ENCODE measurements at regions of chr1 and their contacts with region 1.

Region 1: GRCh38 chr1:229661022-229661877 is 35.2 kb downstream of the URB2 start:
- DNase-seq: peak; percentile 30
- H3K4me3 ChIP-seq: no peak overlapping the region
- H3K27ac ChIP-seq: no peak overlapping the region
- H3K27me3 ChIP-seq: no peaks in the 10 kb centered on the region
- CTCF ChIP-seq: peak; percentile 91

Region 2: GRCh38 chr1:229378586-229379367 is 282.5 kb before region 1 on chr1:
- CTCF ChIA-PET with region 1: no interaction called
- POLR2A ChIA-PET with region 1: no interaction called
- DNase-seq: no peak
- H3K4me3 ChIP-seq: no peak overlapping the region
- H3K27ac ChIP-seq: no peak overlapping the region
- H3K27me3 ChIP-seq: peaks cover 4% of the 10 kb centered on the region
- CTCF ChIP-seq: 0 out of 2 replicates have a peak, but pooled peaks have one; percentile 4

Region 3: DNA sequence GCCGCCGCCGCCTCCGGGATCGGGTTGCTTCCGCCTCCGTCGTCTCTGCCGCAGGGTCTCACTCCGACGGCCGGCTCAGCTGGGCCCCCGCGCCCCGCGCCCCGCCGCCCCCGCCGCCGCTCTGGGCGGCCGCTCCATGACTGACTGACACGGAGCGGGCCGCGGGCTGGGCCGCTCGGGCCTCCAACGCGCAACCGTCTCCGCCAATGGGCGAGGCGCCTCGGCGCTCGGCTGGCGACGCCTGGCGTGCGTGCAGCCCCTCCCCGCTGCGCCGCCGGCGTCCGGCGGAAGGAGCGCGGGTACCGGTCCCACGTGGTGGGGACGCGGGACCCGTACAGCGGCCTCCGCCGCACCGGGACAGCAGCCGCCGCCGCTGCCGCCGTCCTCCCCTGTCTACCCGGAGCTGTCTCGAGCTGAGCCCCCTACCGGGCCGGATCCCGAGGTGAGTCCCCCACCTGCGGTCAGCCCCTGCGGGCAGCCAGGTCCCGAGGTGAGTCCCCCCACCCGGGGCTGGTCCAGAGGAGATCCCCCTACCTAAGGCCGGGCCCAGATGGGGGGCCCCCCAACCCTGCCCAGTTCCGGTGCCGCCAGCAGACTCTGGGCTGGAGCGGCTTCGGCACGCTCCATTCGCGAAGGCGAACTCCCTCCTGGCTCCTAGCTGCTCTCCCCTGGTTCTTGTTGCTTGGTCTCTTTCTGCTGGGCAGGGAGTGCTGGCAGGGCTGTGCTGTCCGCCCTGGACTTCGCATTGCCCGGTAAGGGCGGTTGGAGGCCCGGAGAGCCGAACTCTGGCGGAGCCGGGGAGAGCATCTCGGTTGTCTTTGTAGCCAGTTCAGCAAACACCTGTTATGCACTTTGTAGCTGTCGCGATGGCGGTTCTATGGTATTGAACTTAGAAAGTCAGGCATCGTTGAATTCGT is 35.1 kb before region 1 on chr1 and contains the starts of genes TAF5L and URB2:
- CTCF ChIA-PET with region 1: no interaction called
- POLR2A ChIA-PET with region 1: no interaction called
- DNase-seq: peak; percentile 65
- H3K4me3 ChIP-seq: peak within 1 kb of the TSS; percentile 93
- H3K27ac ChIP-seq: peak within 1 kb of the TSS; percentile 66
- H3K27me3 ChIP-seq: no peaks in the 10 kb centered on the region
- CTCF ChIP-seq: no peak
- polyA plus RNA-seq, gene TAF5L: 17.3 and 17.9 TPM in 2 replicates
- polyA plus RNA-seq, gene URB2: 6.2 and 6.4 TPM in 2 replicates

Region 4: GRCh38 chr1:229674042-229674441 is 12.8 kb after region 1 on chr1:
- CTCF ChIA-PET with region 1: interaction called, 14 read pairs
- POLR2A ChIA-PET with region 1: interaction called, 4 read pairs
- DNase-seq: no peak
- H3K4me3 ChIP-seq: no peak overlapping the region
- H3K27ac ChIP-seq: no peak overlapping the region
- H3K27me3 ChIP-seq: no peaks in the 10 kb centered on the region
- CTCF ChIP-seq: no peak

Region 5: DNA sequence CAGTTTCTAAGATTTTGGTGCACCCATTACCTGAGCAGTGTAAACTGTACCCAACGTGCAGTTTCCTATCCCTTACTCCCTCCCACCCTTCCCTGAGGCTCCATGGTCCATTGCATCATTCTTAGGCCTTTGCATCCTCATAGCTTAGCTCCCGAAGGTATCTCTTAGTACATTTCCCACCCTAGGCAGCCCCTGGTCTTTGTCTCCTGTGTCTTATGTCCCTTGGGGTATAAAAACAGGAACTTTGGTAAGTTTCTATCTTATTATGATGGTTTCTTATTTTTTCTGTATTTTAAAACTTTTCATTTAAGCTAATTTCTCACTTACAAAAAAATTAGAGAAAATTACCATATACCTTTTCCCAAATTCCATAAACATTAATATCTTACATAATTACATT is 42.9 kb after region 1 on chr1:
- CTCF ChIA-PET with region 1: no interaction called
- POLR2A ChIA-PET with region 1: no interaction called
- DNase-seq: no peak
- H3K4me3 ChIP-seq: no peak overlapping the region
- H3K27ac ChIP-seq: no peak overlapping the region
- H3K27me3 ChIP-seq: no peaks in the 10 kb centered on the region
- CTCF ChIP-seq: no peak

Region 6: DNA sequence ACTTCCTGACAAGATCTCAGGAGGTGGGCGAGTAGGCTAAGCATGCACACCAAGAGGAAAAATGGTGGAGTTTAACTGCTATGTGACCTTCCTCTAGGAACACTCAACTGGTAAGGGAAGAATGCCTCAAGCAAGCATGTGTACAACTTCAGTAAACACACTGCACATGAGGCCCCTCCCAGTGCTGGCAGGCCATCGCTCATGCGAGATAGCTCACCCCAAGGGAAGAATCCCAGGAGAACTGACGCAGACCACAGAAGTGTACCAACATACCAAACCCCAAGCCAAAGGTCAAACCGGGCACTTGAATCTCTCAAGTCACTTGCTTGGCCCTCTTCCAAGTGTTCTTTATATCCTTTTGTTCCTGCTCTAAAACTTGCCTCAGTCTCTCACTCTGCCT is 365.3 kb after region 1 on chr1:
- CTCF ChIA-PET with region 1: no interaction called
- POLR2A ChIA-PET with region 1: no interaction called
- DNase-seq: no peak
- H3K4me3 ChIP-seq: no peak overlapping the region
- H3K27ac ChIP-seq: no peak overlapping the region
- H3K27me3 ChIP-seq: peaks cover 2% of the 10 kb centered on the region
- CTCF ChIP-seq: no peak

Region 7: GRCh38 chr1:230303822-230304221 is 642.6 kb after region 1 on chr1:
- CTCF ChIA-PET with region 1: interaction called, 10 read pairs
- POLR2A ChIA-PET with region 1: no interaction called
- DNase-seq: no peak
- H3K4me3 ChIP-seq: no peak overlapping the region
- H3K27ac ChIP-seq: no peak overlapping the region
- H3K27me3 ChIP-seq: peaks cover 6% of the 10 kb centered on the region
- CTCF ChIP-seq: no peak

Region 8: DNA sequence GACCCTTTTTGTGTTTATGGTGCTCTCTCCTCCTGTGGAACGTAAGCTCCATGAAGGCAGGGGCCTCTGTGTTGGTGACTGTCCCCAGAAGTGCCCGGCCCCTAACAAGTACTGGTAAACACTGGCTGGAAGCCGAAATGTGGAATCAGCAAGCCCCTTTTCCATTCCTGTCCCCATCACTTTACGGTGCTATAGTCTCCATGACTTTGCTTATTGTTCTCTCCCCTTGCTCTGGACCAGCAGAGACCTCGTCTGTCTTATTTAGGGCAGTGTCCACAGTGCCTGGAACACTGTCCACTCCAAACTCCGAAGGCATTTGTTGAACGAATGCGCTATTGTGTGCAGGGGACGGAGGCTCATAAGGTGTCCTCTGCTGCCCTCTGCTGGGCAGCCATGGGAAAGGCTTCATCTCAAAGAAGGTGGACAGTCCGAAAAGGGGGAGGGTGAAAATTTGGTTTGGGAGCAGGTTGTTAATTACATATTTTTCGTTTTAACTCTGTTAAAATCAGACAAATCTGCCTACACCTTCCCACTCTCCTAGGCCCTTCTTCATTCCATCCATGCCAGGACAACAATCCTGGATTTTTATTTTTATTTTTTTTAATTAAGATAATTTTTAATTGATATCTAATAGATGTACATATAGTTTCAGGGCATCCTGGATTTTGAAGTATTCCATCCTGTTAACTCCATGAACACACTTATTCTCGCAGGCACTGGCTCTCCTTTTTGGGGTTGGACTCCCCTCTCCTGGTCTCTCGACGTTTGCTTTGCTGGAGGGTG is 649.3 kb after region 1 on chr1:
- CTCF ChIA-PET with region 1: interaction called, 16 read pairs
- POLR2A ChIA-PET with region 1: no interaction called
- DNase-seq: peak; percentile 36
- H3K4me3 ChIP-seq: no peak overlapping the region
- H3K27ac ChIP-seq: no peak overlapping the region
- H3K27me3 ChIP-seq: peaks cover 4% of the 10 kb centered on the region
- CTCF ChIP-seq: peak; percentile 97